ENCODE measurements at regions of chr1 and their contacts with region 1.

Region 1: GRCh38 chr1:204076891-204077290 is 4.0 kb downstream of the SOX13 start:
- DNase-seq: no peak
- ATAC-seq: no peak
- H3K4me3 ChIP-seq: no peak overlapping the region
- H3K4me3 Mint-ChIP-seq: no peak overlapping the region
- H3K27ac ChIP-seq: no peak overlapping the region
- H3K27ac Mint-ChIP-seq: no peak overlapping the region
- H3K4me1 ChIP-seq: peaks cover 16% of the 10 kb centered on the region
- H3K4me1 Mint-ChIP-seq: peaks cover 23% of the 10 kb centered on the region
- H3K27me3 ChIP-seq: peaks cover 9 to 10% of the 10 kb centered on the region in 2 experiments
- H3K27me3 Mint-ChIP-seq: peaks cover 51% of the 10 kb centered on the region
- CTCF ChIP-seq: no peak

Region 2: DNA sequence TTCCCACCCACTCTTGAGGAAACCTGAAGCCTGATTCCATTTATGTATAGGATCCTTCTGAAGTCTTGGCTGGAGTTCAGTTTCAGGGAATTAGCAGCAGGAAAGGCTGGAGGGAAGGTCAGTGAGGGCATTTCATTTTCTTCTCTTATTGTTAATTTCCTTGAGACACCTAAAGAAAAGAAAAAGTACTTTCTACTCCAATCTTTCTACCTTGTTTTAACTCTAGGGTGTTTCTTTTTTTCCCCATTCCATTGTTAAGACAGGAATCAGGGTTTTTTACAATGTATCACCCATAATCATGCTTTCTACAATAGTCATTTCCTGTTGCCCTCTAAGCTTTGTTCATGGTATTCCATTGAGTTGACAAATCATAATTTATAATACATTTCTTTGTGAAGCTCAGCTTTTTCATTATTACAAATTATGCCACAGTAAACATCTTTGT is 188.1 kb before region 1 on chr1:
- CTCF ChIA-PET with region 1: no interaction called
- POLR2A ChIA-PET with region 1: no interaction called
- intact Hi-C with region 1: no loop called
- DNase-seq: no peak
- ATAC-seq: no peak
- H3K4me3 ChIP-seq: no peak overlapping the region
- H3K4me3 Mint-ChIP-seq: no peak overlapping the region
- H3K27ac ChIP-seq: no peak overlapping the region
- H3K27ac Mint-ChIP-seq: no peak overlapping the region
- H3K4me1 ChIP-seq: no peaks in the 10 kb centered on the region
- H3K4me1 Mint-ChIP-seq: no peaks in the 10 kb centered on the region
- H3K27me3 ChIP-seq: no peaks in the 10 kb centered on the region
- H3K27me3 Mint-ChIP-seq: no peaks in the 10 kb centered on the region
- CTCF ChIP-seq: no peak

Region 3: DNA sequence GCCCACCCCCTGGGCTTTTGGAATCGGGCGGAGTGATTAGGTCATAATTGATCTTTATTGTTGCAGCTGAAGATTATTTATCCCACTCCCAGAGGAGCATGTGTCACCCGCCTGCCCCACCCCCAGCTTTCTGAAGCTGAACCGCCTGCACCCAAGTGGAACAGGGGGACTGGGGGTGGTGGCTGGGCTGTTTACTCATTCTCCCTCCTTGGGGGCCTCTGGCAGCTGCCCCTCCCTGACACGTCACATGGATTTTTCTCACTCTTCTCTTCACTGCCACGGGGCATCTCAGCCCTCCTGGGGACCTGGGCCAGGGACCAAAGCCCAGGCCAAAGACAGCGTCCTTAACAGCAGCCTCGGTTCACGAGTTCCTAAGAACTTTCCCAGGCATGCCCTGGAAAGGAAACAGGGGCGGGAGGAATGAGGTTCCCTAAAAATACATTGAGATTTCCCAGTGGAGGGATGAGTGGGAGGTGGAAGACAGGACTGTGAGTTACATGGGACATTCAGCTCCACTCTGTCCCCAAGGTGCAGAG is 35.6 kb before region 1 on chr1:
- CTCF ChIA-PET with region 1: no interaction called
- POLR2A ChIA-PET with region 1: no interaction called
- intact Hi-C with region 1: no loop called
- DNase-seq: no peak
- ATAC-seq: no peak
- H3K4me3 ChIP-seq: no peak overlapping the region
- H3K4me3 Mint-ChIP-seq: no peak overlapping the region
- H3K27ac ChIP-seq: no peak overlapping the region
- H3K27ac Mint-ChIP-seq: no peak overlapping the region
- H3K4me1 ChIP-seq: no peaks in the 10 kb centered on the region
- H3K4me1 Mint-ChIP-seq: no peaks in the 10 kb centered on the region
- H3K27me3 ChIP-seq: no peaks in the 10 kb centered on the region
- H3K27me3 Mint-ChIP-seq: peaks cover 3% of the 10 kb centered on the region
- CTCF ChIP-seq: no peak

Region 4: DNA sequence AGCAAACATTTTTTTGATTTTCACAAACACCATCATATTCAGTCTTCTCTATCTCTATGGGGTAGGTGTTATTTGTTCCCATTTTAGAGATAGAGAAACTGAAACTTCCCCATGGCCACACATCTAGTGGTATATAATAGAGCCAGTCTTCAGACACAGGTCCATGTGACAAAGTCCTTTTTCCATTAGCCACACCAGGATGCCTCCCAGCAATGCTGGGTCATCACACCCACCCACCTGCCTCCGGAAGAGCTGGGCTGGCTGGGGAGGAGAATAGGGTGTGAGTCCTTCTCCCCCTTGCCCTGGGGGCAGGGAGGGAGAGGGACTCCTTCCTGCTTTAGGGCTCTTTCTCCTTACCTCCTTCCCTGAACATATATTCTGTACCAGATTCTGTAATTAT is 25.8 kb after region 1 on chr1:
- CTCF ChIA-PET with region 1: interaction called, 3 read pairs
- POLR2A ChIA-PET with region 1: no interaction called
- intact Hi-C with region 1: loop called in 1 of 2 experiments (anchors 1 kb)
- DNase-seq: peak in 1 of 9 experiments; percentile 29
- ATAC-seq: peak; percentile 12
- H3K4me3 ChIP-seq: no peak overlapping the region
- H3K4me3 Mint-ChIP-seq: peak overlapping the region; percentile 61
- H3K27ac ChIP-seq: peak overlapping the region in 1 of 2 experiments; percentile 88
- H3K27ac Mint-ChIP-seq: peak overlapping the region; percentile 82
- H3K4me1 ChIP-seq: peaks cover 33% of the 10 kb centered on the region
- H3K4me1 Mint-ChIP-seq: peaks cover 33% of the 10 kb centered on the region
- H3K27me3 ChIP-seq: no peaks in the 10 kb centered on the region
- H3K27me3 Mint-ChIP-seq: no peaks in the 10 kb centered on the region
- CTCF ChIP-seq: no peak

Region 5: GRCh38 chr1:204225841-204226735 is 149.2 kb after region 1 on chr1:
- CTCF ChIA-PET with region 1: no interaction called
- POLR2A ChIA-PET with region 1: no interaction called
- intact Hi-C with region 1: no loop called
- DNase-seq: no peak
- ATAC-seq: no peak
- H3K4me3 ChIP-seq: no peak overlapping the region
- H3K4me3 Mint-ChIP-seq: no peak overlapping the region
- H3K27ac ChIP-seq: no peak overlapping the region
- H3K27ac Mint-ChIP-seq: no peak overlapping the region
- H3K4me1 ChIP-seq: no peaks in the 10 kb centered on the region
- H3K4me1 Mint-ChIP-seq: no peaks in the 10 kb centered on the region
- H3K27me3 ChIP-seq: no peaks in the 10 kb centered on the region
- H3K27me3 Mint-ChIP-seq: no peaks in the 10 kb centered on the region
- CTCF ChIP-seq: no peak